ENCODE measurements at regions of chr1 and their contacts with region 1.

Region 1: GRCh38 chr1:243748706-243749283 is 101.2 kb downstream of the AKT3 start:
- DNase-seq: peak; percentile 87
- H3K4me3 Mint-ChIP-seq: no peak overlapping the region
- H3K27ac Mint-ChIP-seq: no peak overlapping the region
- H3K4me1 Mint-ChIP-seq: no peaks in the 10 kb centered on the region
- H3K27me3 Mint-ChIP-seq: no peaks in the 10 kb centered on the region
- CTCF ChIP-seq: peak; percentile 88

Region 2: GRCh38 chr1:243708210-243708609 is 40.6 kb before region 1 on chr1:
- CTCF ChIA-PET with region 1: interaction called, 24 read pairs
- POLR2A ChIA-PET with region 1: no interaction called
- intact Hi-C with region 1: loop called (anchors 2 kb)
- DNase-seq: peak; percentile 32
- H3K4me3 Mint-ChIP-seq: no peak overlapping the region
- H3K27ac Mint-ChIP-seq: no peak overlapping the region
- H3K4me1 Mint-ChIP-seq: no peaks in the 10 kb centered on the region
- H3K27me3 Mint-ChIP-seq: no peaks in the 10 kb centered on the region
- CTCF ChIP-seq: peak; percentile 79

Region 3: DNA sequence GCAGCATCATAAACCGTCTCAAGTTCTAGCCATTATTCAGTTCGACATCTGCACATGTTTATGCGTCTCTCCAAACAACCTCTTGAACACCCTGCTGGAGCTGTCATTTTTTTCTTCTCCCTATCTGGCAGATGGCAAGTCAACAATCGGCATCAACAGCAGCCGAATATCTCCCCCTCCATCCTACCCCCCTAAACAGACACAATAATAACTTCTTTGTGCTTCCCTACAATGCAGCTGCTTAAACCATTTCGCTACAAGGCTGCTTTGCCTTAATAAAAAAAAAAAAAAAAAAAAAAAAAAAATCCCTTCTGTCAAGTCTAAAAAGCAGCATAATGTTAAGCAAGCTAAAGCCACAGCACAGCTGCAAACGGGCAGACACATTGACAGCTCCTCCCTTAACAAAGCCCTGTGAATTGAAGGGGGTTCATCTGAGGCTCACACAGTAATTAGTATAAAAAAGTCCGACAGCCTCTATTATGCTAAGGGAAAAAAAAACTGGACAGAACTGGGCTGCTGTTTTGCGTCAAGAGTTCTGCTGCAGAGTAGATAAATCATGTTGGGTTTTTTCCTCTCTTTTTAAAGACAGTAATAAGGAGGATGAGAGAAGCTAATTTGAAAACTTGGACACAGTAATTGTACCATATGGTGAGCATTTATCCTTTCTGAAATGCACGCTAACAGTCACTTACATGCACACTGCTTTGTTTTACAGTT is 35.2 kb before region 1 on chr1:
- CTCF ChIA-PET with region 1: interaction called, 24 read pairs
- POLR2A ChIA-PET with region 1: interaction called, 4 read pairs
- intact Hi-C with region 1: loop called (anchors 2 kb)
- DNase-seq: no peak
- H3K4me3 Mint-ChIP-seq: no peak overlapping the region
- H3K27ac Mint-ChIP-seq: no peak overlapping the region
- H3K4me1 Mint-ChIP-seq: peaks cover 6% of the 10 kb centered on the region
- H3K27me3 Mint-ChIP-seq: no peaks in the 10 kb centered on the region
- CTCF ChIP-seq: no peak

Region 4: DNA sequence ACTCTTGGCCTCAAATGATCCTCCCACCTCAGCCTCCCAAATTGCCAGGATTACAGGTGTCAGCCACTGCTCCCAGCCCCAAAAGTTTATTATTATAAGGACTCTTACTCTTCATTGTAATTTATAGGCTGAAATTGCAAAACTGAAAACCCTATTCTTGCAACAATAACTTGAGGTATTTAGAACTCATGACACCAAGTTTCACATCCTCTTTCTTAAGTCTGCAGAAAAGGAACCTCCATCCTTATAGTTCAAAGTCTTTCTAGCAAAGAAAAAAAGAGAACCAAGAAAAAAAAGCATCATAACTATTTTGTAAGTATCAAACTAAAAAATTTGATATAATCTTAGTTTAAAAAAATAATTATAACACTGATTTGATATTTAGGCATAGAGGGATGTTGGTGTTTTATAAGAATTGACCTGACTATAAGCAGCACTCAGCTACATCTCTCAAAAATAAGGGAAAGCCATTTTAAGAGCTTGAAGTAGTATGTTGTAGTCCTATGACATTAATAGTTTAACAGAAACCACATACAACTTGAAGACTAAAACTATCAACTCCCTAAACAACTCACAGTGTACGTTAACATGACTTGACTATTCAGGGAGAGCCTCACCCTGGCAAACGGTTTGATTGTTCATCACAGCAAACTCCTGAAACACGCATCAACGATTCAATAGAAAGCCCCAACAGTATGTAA is 21.1 kb before region 1 on chr1:
- CTCF ChIA-PET with region 1: interaction called, 57 read pairs
- POLR2A ChIA-PET with region 1: interaction called, 5 read pairs
- intact Hi-C with region 1: no loop called
- DNase-seq: no peak
- H3K4me3 Mint-ChIP-seq: no peak overlapping the region
- H3K27ac Mint-ChIP-seq: no peak overlapping the region
- H3K4me1 Mint-ChIP-seq: no peaks in the 10 kb centered on the region
- H3K27me3 Mint-ChIP-seq: no peaks in the 10 kb centered on the region
- CTCF ChIP-seq: no peak

Region 5: GRCh38 chr1:243734308-243734695 is 14.5 kb before region 1 on chr1:
- CTCF ChIA-PET with region 1: interaction called, 57 read pairs
- POLR2A ChIA-PET with region 1: interaction called, 5 read pairs
- intact Hi-C with region 1: no loop called
- DNase-seq: peak; percentile 76
- H3K4me3 Mint-ChIP-seq: no peak overlapping the region
- H3K27ac Mint-ChIP-seq: no peak overlapping the region
- H3K4me1 Mint-ChIP-seq: peaks cover 5% of the 10 kb centered on the region
- H3K27me3 Mint-ChIP-seq: no peaks in the 10 kb centered on the region
- CTCF ChIP-seq: no peak

Region 6: GRCh38 chr1:243946946-243947345 is 198.2 kb after region 1 on chr1:
- CTCF ChIA-PET with region 1: interaction called, 4 read pairs
- POLR2A ChIA-PET with region 1: no interaction called
- intact Hi-C with region 1: loop called (anchors 10 kb)
- DNase-seq: peak; percentile 55
- H3K4me3 Mint-ChIP-seq: no peak overlapping the region
- H3K27ac Mint-ChIP-seq: no peak overlapping the region
- H3K4me1 Mint-ChIP-seq: no peaks in the 10 kb centered on the region
- H3K27me3 Mint-ChIP-seq: no peaks in the 10 kb centered on the region
- CTCF ChIP-seq: peak; percentile 59

Measured in MCF 10A (cell line).